ENCODE measurements at regions of chr3 and their contacts with region 1.

Region 1: DNA sequence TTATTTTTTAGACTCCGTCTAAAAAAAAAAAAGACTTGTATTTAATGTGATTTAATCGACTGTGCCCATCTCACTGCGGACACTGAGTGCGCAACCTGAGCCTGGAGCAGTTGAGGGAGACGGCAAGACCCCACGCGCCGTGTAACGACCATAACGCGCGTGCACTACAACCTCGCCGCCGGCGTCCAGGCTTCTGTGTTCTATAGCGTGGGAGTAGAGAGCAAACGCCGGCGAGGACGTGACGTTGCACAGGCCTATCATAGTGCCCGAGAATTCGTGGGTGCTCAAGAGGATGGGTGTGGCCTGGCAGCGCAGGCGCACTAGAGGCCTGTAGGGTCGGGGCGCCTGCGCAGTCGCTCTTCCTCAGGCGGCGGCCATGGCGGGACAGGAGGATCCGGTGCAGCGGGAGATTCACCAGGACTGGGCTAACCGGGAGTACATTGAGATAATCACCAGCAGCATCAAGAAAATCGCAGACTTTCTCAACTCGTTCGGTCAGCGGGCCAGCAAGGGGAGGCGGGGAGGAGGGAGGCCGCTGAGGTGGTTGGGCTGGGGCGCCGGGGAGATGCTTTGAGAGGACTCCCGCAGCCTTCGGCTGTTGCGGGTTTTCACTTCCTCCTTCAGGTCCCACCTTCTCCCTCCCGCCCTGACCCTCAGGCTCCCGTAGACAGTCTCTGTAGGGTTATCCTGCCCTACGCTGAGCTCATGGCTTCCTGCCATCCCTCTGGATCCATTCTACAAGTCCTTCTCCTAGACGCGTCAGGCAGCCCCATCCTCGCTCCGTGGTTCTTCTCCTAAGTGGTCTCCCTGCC is at the start of gene BRK1:
- DNase-seq: peak; percentile 83 to 98 (median 93)
- ATAC-seq: peak; percentile 98
- H3K4me3 ChIP-seq: peak within 1 kb of the TSS; percentile 87 to 95
- H3K4me3 Mint-ChIP-seq: peak within 1 kb of the TSS; percentile 99
- H3K27ac ChIP-seq: peak within 1 kb of the TSS; percentile 81 to 87
- H3K27ac Mint-ChIP-seq: peak within 1 kb of the TSS; percentile 99
- H3K4me1 ChIP-seq: peaks cover 27% of the 10 kb centered on the region
- H3K4me1 Mint-ChIP-seq: peaks cover 43% of the 10 kb centered on the region
- H3K27me3 ChIP-seq: no peaks in the 10 kb centered on the region
- H3K27me3 Mint-ChIP-seq: peaks cover under 1% of the 10 kb centered on the region
- CTCF ChIP-seq: no peak
- total RNA-seq, gene BRK1: 31.5 to 36.3 TPM

Region 2: DNA sequence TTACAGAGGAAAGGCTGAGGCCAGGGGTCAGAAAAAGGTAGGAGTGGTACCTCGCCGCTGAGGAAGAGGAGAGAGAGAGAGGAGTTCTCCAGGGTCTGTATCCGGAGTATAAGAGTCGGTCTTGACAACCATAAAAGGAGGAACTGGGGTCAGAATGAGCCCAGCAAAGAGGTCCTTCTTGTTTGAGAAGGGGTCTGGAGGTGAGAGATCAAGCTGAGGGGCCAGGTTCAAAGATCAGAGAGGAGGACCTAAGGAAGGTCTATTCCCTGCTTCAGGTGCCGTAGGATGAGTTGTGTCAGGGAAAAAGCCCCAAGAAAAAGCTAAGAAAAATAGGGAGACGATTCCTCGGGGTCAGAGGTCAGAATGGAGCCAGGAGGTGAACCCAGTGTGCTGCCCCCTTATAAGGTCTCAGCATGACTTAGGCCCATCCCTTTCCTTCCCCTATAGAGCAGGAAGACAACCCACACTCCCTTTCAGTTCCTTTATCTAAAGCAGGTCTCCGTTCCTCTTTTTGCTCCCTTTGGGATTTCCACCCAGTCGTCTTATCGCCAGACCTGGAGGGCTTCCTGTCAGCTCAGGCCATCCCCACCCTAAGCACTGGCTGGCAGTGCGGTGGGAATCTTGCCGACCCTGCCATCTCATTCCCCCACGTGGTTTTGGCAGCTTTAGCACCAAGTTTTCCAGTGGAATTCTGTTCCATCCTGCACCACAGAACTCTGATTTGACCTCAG is 465.6 kb before region 1 on chr3:
- CTCF ChIA-PET with region 1: no interaction called
- POLR2A ChIA-PET with region 1: no interaction called
- intact Hi-C with region 1: loop called in 1 of 2 experiments (anchors 2 kb)
- DNase-seq: peak in 2 of 9 experiments; percentile 10 to 42
- ATAC-seq: no peak
- H3K4me3 ChIP-seq: peak overlapping the region; percentile 90 to 91
- H3K4me3 Mint-ChIP-seq: peak overlapping the region; percentile 93
- H3K27ac ChIP-seq: peak overlapping the region; percentile 88 to 94
- H3K27ac Mint-ChIP-seq: peak overlapping the region; percentile 97
- H3K4me1 ChIP-seq: peaks cover 27% of the 10 kb centered on the region
- H3K4me1 Mint-ChIP-seq: peaks cover 39% of the 10 kb centered on the region
- H3K27me3 ChIP-seq: no peaks in the 10 kb centered on the region
- H3K27me3 Mint-ChIP-seq: no peaks in the 10 kb centered on the region
- CTCF ChIP-seq: no peak

Region 3: GRCh38 chr3:9890249-9891071 is 225.1 kb before region 1 on chr3 and contains the start of gene JAGN1:
- CTCF ChIA-PET with region 1: no interaction called
- POLR2A ChIA-PET with region 1: no interaction called
- intact Hi-C with region 1: loop called in 1 of 2 experiments (anchors 2 kb)
- DNase-seq: peak; percentile 86 to 94 (median 91)
- ATAC-seq: peak; percentile 92
- H3K4me3 ChIP-seq: peak within 1 kb of the TSS; percentile 95 to 96
- H3K4me3 Mint-ChIP-seq: peak within 1 kb of the TSS; percentile 98
- H3K27ac ChIP-seq: peak within 1 kb of the TSS; percentile 99 to 100
- H3K27ac Mint-ChIP-seq: peak within 1 kb of the TSS; percentile 100
- H3K4me1 ChIP-seq: peaks cover 16% of the 10 kb centered on the region
- H3K4me1 Mint-ChIP-seq: peaks cover 40% of the 10 kb centered on the region
- H3K27me3 ChIP-seq: no peaks in the 10 kb centered on the region
- H3K27me3 Mint-ChIP-seq: no peaks in the 10 kb centered on the region
- CTCF ChIP-seq: no peak
- total RNA-seq, gene JAGN1: 13.4 to 14.5 TPM

Region 4: DNA sequence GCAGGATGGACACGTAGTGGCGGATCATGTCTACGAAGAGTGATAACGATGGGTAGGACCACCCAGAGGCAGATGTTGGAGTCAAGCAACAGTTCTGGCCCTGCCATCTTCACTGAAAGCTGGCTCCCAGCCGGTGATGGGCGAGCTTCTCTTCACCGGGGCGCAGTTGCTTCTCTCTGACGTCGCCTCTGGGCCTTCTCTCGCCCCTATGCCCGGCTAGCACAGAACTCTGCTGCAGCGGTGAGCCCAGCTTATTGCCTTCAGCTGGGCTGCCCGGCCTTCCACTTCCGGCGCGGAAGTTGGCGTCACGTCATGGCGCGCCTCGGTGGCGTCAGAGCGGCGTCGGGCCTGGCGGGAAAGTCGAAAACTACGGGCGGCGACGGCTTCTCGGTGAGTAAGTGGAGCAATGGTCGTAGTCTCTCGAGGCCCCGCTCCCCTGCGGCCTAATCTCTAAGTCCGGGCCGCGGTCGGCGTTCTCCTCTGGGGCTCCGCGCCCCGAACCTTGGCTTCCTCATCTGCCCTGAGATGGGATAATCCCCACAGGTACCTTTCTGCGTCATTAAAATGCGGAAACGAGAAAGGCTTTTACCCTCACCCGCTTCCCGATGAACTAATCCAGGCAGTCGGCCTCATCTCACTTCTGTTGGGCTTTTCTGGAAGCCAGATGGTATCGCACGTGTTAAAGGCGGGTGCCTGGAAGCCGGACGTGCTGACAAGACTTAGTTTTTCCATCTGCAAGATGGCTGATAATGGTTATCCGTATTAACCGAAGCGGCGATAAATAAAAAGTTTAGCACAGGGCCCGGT is 89.2 kb before region 1 on chr3 and contains the start of gene FANCD2:
- CTCF ChIA-PET with region 1: no interaction called
- POLR2A ChIA-PET with region 1: no interaction called
- intact Hi-C with region 1: loop called (anchors 1 to 5 kb)
- DNase-seq: peak; percentile 87 to 97 (median 93)
- ATAC-seq: peak; percentile 92
- H3K4me3 ChIP-seq: peak within 1 kb of the TSS; percentile 76 to 82
- H3K4me3 Mint-ChIP-seq: peak within 1 kb of the TSS; percentile 98
- H3K27ac ChIP-seq: peak within 1 kb of the TSS; percentile 84
- H3K27ac Mint-ChIP-seq: peak within 1 kb of the TSS; percentile 96
- H3K4me1 ChIP-seq: peaks cover 18% of the 10 kb centered on the region
- H3K4me1 Mint-ChIP-seq: peaks cover 27% of the 10 kb centered on the region
- H3K27me3 ChIP-seq: no peaks in the 10 kb centered on the region
- H3K27me3 Mint-ChIP-seq: no peaks in the 10 kb centered on the region
- CTCF ChIP-seq: no peak
- total RNA-seq, gene FANCD2: 15.8 to 17.7 TPM

Region 5: DNA sequence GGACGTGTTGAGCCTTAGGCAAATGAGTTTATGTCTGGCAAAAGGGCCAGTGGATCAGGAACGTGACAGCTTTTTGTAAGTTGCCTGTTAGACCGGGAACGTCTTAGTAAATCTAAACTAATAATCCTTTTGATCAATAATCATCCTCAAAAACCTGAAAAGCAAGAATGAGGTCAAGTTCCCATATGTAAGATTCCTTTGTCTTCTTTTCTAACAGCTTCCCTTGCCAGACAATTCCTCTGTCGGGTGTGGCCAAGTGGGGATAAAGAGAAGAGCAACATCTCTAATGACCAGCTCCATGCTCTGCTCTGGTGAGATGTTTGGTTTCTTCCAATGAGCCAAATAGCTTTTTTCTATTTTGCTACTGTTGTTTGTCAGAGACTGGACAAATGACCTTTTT is 27.3 kb before region 1 on chr3:
- CTCF ChIA-PET with region 1: no interaction called
- POLR2A ChIA-PET with region 1: no interaction called
- intact Hi-C with region 1: no loop called
- DNase-seq: no peak
- ATAC-seq: no peak
- H3K4me3 ChIP-seq: no peak overlapping the region
- H3K4me3 Mint-ChIP-seq: no peak overlapping the region
- H3K27ac ChIP-seq: no peak overlapping the region
- H3K27ac Mint-ChIP-seq: no peak overlapping the region
- H3K4me1 ChIP-seq: no peaks in the 10 kb centered on the region
- H3K4me1 Mint-ChIP-seq: no peaks in the 10 kb centered on the region
- H3K27me3 ChIP-seq: no peaks in the 10 kb centered on the region
- H3K27me3 Mint-ChIP-seq: no peaks in the 10 kb centered on the region
- CTCF ChIP-seq: no peak

Region 6: GRCh38 chr3:10149226-10149625 is 33.7 kb after region 1 on chr3:
- CTCF ChIA-PET with region 1: no interaction called
- POLR2A ChIA-PET with region 1: no interaction called
- intact Hi-C with region 1: no loop called
- DNase-seq: no peak
- ATAC-seq: no peak
- H3K4me3 ChIP-seq: no peak overlapping the region
- H3K4me3 Mint-ChIP-seq: no peak overlapping the region
- H3K27ac ChIP-seq: no peak overlapping the region
- H3K27ac Mint-ChIP-seq: peak overlapping the region; percentile 27
- H3K4me1 ChIP-seq: peaks cover 9% of the 10 kb centered on the region
- H3K4me1 Mint-ChIP-seq: peaks cover 17% of the 10 kb centered on the region
- H3K27me3 ChIP-seq: no peaks in the 10 kb centered on the region
- H3K27me3 Mint-ChIP-seq: no peaks in the 10 kb centered on the region
- CTCF ChIP-seq: no peak

Region 7: GRCh38 chr3:10164546-10165393 is 49.2 kb after region 1 on chr3 and contains the start of gene IRAK2:
- CTCF ChIA-PET with region 1: no interaction called
- POLR2A ChIA-PET with region 1: no interaction called
- intact Hi-C with region 1: loop called (anchors 1 kb)
- DNase-seq: peak; percentile 18 to 77 (median 52)
- ATAC-seq: peak; percentile 87
- H3K4me3 ChIP-seq: peak within 1 kb of the TSS; percentile 90 to 91
- H3K4me3 Mint-ChIP-seq: peak within 1 kb of the TSS; percentile 82
- H3K27ac ChIP-seq: peak within 1 kb of the TSS; percentile 48 to 59
- H3K27ac Mint-ChIP-seq: peak within 1 kb of the TSS; percentile 52
- H3K4me1 ChIP-seq: peaks cover 16% of the 10 kb centered on the region
- H3K4me1 Mint-ChIP-seq: peaks cover 19% of the 10 kb centered on the region
- H3K27me3 ChIP-seq: no peaks in the 10 kb centered on the region
- H3K27me3 Mint-ChIP-seq: no peaks in the 10 kb centered on the region
- CTCF ChIP-seq: peak; percentile 97
- total RNA-seq, gene IRAK2: 1.6 to 1.7 TPM

Region 8: DNA sequence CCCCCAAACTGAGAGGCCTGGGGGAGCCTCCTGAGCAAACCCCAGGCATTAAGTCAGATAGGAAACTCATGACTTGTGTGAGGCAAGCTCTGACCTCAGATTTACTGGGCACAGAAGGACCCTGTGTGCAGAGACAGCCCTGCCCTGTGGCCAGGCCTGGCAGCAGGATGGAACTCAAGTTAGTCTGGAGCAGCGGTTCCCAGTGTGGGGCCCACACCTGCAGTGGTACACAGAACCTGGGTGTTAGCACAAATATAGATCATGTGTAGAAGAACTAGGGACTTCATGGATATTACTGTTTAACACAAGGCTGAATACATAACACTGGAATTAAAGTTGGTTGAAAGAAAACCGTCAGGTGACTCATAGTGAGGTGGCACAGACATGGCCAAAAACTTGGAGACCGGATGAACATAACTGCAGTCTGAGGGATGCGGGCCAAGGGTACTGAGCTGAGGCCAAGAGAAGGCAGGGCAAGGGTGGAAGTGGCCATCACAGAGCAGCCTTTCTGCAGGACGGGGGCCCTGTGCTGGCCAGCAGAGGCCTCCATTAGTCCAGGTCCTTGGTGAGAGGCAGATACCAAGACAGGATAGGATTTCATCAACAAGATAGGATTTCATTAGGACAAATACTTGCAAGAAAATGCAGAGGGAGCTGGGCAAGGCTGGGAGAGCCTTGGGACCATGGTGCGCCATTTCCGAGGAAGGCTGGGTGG is 90.1 kb after region 1 on chr3:
- CTCF ChIA-PET with region 1: no interaction called
- POLR2A ChIA-PET with region 1: no interaction called
- intact Hi-C with region 1: no loop called
- DNase-seq: no peak
- ATAC-seq: no peak
- H3K4me3 ChIP-seq: no peak overlapping the region
- H3K4me3 Mint-ChIP-seq: no peak overlapping the region
- H3K27ac ChIP-seq: no peak overlapping the region
- H3K27ac Mint-ChIP-seq: no peak overlapping the region
- H3K4me1 ChIP-seq: peaks cover 1% of the 10 kb centered on the region
- H3K4me1 Mint-ChIP-seq: peaks cover 16% of the 10 kb centered on the region
- H3K27me3 ChIP-seq: no peaks in the 10 kb centered on the region
- H3K27me3 Mint-ChIP-seq: no peaks in the 10 kb centered on the region
- CTCF ChIP-seq: no peak

Region 9: GRCh38 chr3:10322352-10322710 is 206.8 kb after region 1 on chr3:
- CTCF ChIA-PET with region 1: no interaction called
- POLR2A ChIA-PET with region 1: no interaction called
- intact Hi-C with region 1: loop called in 1 of 2 experiments (anchors 5 kb)
- DNase-seq: peak in 2 of 9 experiments; percentile 37 to 47
- ATAC-seq: no peak
- H3K4me3 ChIP-seq: no peak overlapping the region
- H3K4me3 Mint-ChIP-seq: peak overlapping the region; percentile 18
- H3K27ac ChIP-seq: no peak overlapping the region
- H3K27ac Mint-ChIP-seq: no peak overlapping the region
- H3K4me1 ChIP-seq: peaks cover 16% of the 10 kb centered on the region
- H3K4me1 Mint-ChIP-seq: peaks cover 29% of the 10 kb centered on the region
- H3K27me3 ChIP-seq: no peaks in the 10 kb centered on the region
- H3K27me3 Mint-ChIP-seq: peaks cover 3% of the 10 kb centered on the region
- CTCF ChIP-seq: peak; percentile 31

Region 10: DNA sequence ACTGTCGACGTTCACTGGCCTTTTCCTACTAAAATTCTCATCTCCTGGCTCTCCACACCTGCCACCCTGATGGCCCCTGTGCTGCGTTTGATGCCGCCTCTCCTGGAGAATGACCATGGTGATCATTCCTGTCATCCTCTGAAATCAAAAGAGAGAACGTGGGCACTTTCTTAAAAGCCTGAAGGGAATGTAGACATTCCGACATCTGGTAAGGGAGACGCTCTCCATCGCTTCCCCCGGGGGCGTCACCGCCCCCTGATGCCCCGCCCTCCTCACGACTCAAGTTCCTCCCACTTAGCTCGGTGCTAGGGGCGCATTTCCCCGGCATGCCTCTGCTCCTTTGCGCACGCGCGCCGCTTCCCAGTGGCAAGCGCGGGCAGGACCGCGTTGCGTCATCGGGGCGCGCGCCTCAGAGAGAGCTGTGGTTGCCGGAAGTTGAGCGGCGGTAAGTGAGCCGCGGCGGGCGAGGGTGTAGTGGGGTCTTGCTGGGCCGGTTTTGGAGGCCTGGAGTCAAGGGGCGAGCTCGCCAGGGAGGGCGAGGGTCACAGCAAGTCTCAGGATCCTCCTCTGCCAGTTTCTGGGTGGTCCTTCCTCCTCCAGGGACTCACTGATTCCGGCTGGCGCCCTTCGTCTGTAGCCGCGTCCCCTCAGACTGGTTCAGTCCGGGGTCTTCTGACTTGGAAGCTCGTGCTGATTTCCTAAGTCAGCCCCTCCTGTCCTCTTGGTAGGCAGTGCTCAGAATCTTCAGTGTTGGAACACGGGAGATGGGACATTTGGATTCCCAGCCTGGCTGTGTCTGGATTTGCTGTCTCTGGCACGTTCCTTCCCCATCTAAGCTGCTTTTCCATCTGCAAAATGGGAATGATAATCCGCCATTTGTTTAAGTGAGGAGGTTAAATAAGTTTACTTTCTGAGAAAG is 1156.7 kb after region 1 on chr3 and contains the start of gene ATG7:
- CTCF ChIA-PET with region 1: no interaction called
- POLR2A ChIA-PET with region 1: no interaction called
- intact Hi-C with region 1: loop called in 1 of 2 experiments (anchors 5 kb)
- DNase-seq: peak; percentile 94 to 98 (median 97)
- ATAC-seq: peak; percentile 98
- H3K4me3 ChIP-seq: peak within 1 kb of the TSS; percentile 77 to 96
- H3K4me3 Mint-ChIP-seq: peak within 1 kb of the TSS; percentile 96
- H3K27ac ChIP-seq: peak within 1 kb of the TSS; percentile 94 to 97
- H3K27ac Mint-ChIP-seq: peak within 1 kb of the TSS; percentile 99
- H3K4me1 ChIP-seq: peaks cover 23% of the 10 kb centered on the region
- H3K4me1 Mint-ChIP-seq: peaks cover 52% of the 10 kb centered on the region
- H3K27me3 ChIP-seq: no peaks in the 10 kb centered on the region
- H3K27me3 Mint-ChIP-seq: no peaks in the 10 kb centered on the region
- CTCF ChIP-seq: no peak
- total RNA-seq, gene ATG7: 21.3 to 23.8 TPM

Measured in CD8-positive, alpha-beta T cell (primary cell).